ENCODE measurements at regions of chrX and their contacts with region 1.

Region 1: GRCh38 chrX:794311-794710 is 163.7 kb downstream of the SHOX start:
- DNase-seq: no peak
- H3K4me3 ChIP-seq: no peak overlapping the region
- H3K27ac ChIP-seq: no peak overlapping the region
- H3K4me1 ChIP-seq: no peaks in the 10 kb centered on the region
- H3K27me3 ChIP-seq: peaks cover 14% of the 10 kb centered on the region
- CTCF ChIP-seq: no peak
- EP300 ChIP-seq: no peak
- POLR2A ChIP-seq: no peak

Region 2: GRCh38 chrX:872090-872489 is 77.8 kb after region 1 on chrX:
- in situ Hi-C with region 1: no loop called
- intact Hi-C with region 1: loop called (anchors 2 kb)
- DNase-seq: no peak
- H3K4me3 ChIP-seq: no peak overlapping the region
- H3K27ac ChIP-seq: no peak overlapping the region
- H3K4me1 ChIP-seq: no peaks in the 10 kb centered on the region
- H3K27me3 ChIP-seq: no peaks in the 10 kb centered on the region
- CTCF ChIP-seq: no peak
- EP300 ChIP-seq: no peak
- POLR2A ChIP-seq: no peak